ENCODE measurements at regions of chr15 and their contacts with region 1.

Region 1: DNA sequence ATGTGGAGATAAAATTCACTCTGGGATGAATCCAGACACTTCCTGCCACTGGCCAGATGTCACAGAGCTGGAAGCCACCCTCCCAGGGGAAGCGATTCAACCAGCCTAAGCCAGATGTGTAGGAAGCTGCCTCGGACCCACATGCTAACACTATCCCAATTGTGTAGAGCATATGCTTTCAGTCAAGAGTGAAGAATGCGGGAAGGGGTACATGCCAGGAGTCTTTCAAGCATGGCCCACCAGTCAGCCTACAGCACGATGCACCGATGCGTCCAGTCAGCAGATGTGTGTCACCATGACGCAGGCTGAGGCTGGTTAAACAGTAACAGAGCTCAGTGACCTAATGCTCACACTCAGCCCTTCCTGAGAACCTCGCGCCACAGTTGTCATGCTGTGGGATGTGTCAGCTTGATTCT is 38.8 kb upstream of the BNC1 start:
- DNase-seq: peak; percentile 98
- ATAC-seq: peak; percentile 87
- H3K4me3 ChIP-seq: no peak overlapping the region
- H3K27ac ChIP-seq: no peak overlapping the region
- H3K4me1 ChIP-seq: no peaks in the 10 kb centered on the region
- H3K27me3 ChIP-seq: no peaks in the 10 kb centered on the region
- CTCF ChIP-seq: no peak
- POLR2A ChIP-seq: no peak
- RAD21 ChIP-seq: no peak

Region 2: GRCh38 chr15:83283138-83283812 is 40.0 kb before region 1 on chr15:
- CTCF ChIA-PET with region 1: no interaction called
- POLR2A ChIA-PET with region 1: no interaction called
- dilution Hi-C with region 1: no loop called
- in situ Hi-C with region 1: no loop called
- intact Hi-C with region 1: loop called (anchors 5 kb)
- DNase-seq: no peak
- ATAC-seq: no peak; the same call in 1 of the 2 replicates
- H3K4me3 ChIP-seq: peak overlapping the region; percentile 24; the same call in 1 of the 2 replicates
- H3K27ac ChIP-seq: no peak overlapping the region
- H3K4me1 ChIP-seq: peaks cover 8% of the 10 kb centered on the region
- H3K27me3 ChIP-seq: peaks cover 44% of the 10 kb centered on the region
- CTCF ChIP-seq: no peak
- POLR2A ChIP-seq: no peak
- RAD21 ChIP-seq: no peak

Region 3: DNA sequence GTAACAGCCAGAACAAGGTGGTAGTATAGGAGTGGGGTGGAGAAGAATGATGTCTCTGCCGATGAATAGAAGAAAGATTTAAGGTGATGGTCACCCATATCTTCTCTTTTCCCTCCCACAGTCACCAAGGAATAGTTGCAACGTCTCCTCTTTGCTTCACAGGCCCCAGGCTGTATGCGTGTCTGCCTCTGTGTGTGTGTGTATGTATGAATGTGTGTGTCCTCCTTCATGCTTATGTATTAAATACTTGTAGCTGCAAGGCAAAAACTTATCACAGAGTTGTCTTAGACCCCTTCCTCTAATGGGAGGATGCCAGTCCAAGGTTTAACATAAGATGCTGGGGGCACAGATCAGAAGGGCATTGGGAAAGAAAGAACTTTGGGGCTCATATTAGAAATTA is 19.8 kb before region 1 on chr15:
- CTCF ChIA-PET with region 1: interaction called, 4 read pairs
- POLR2A ChIA-PET with region 1: no interaction called
- dilution Hi-C with region 1: no loop called
- in situ Hi-C with region 1: no loop called
- intact Hi-C with region 1: loop called (anchors 2 kb)
- DNase-seq: no peak
- ATAC-seq: no peak
- H3K4me3 ChIP-seq: no peak overlapping the region
- H3K27ac ChIP-seq: no peak overlapping the region
- H3K4me1 ChIP-seq: peaks cover 10% of the 10 kb centered on the region; the same call in 1 of the 2 replicates
- H3K27me3 ChIP-seq: no peaks in the 10 kb centered on the region; the same call in 1 of the 2 replicates
- CTCF ChIP-seq: no peak
- POLR2A ChIP-seq: no peak
- RAD21 ChIP-seq: no peak